PC-9 (cell line): ENCODE measurements at regions of chr7 and their contacts with region 1.

Region 1: GRCh38 chr7:94087664-94088352 is 83.7 kb upstream of the BET1 start:
- DNase-seq: peak; percentile 57 to 62
- H3K4me3 ChIP-seq: no peak overlapping the region
- H3K27ac ChIP-seq: no peak overlapping the region
- H3K4me1 ChIP-seq: no peaks in the 10 kb centered on the region
- H3K27me3 ChIP-seq: no peaks in the 10 kb centered on the region
- CTCF ChIP-seq: peak; percentile 80

Region 2: DNA sequence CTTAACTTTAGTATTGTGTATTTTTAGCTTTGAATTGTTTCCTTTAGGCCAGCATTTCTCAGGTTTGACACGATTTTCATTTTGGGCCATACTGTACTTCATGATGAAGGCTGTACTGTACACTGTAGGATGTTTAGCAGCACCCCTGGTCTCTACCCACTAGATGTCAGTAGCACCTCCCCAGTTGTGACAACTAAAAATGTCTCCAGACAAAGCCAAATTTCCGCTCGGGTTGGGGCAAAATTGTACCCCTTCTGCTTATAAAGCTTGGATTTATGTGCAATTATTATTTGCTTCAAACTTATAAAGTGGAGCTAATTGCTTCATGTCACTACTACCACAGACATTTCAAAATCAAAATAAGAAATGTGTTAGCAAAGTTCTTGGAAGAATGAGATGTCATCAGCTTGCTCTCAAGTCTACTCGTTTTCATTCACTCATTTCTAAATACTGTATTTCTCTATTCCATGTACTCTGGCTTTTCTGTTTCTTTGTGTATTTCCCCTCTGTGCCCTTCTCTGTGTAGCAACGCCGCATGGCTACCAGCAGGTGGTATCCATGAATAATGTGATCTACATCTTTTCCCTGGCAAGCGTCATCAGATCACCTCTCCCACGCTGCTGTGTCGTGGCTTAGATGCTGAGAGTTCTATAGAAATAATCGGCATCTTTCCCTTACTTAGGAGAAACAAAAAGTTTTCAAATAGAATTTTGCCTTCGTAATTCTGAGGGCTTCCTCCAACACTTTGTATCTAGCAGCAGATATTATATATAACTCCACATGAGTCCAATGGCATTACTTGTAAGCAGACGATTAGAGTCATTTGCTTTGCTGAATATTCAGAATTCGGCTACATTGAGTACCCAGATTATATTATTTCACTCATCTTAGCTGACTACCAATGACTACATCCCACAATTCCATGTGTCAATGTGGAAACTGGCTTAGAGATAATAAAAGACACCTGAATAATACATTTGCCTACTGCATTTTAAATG is 465.5 kb before region 1 on chr7:
- CTCF ChIA-PET with region 1: no interaction called
- POLR2A ChIA-PET with region 1: no interaction called
- intact Hi-C with region 1: loop called (anchors 5 kb)
- DNase-seq: peak in 1 of 2 experiments; percentile 10
- H3K4me3 ChIP-seq: peak overlapping the region; percentile 19; the same call in 1 of the 2 replicates
- H3K27ac ChIP-seq: no peak overlapping the region
- H3K4me1 ChIP-seq: no peaks in the 10 kb centered on the region
- H3K27me3 ChIP-seq: no peaks in the 10 kb centered on the region
- CTCF ChIP-seq: peak; percentile 62; the same call in 1 of the 2 replicates

Region 3: GRCh38 chr7:94004024-94004951 is 83.5 kb before region 1 on chr7 and contains the start of gene BET1:
- CTCF ChIA-PET with region 1: no interaction called
- POLR2A ChIA-PET with region 1: no interaction called
- intact Hi-C with region 1: loop called (anchors 5 kb)
- DNase-seq: peak; percentile 85 to 88
- H3K4me3 ChIP-seq: peak within 1 kb of the TSS; percentile 91
- H3K27ac ChIP-seq: peak within 1 kb of the TSS; percentile 77
- H3K4me1 ChIP-seq: peaks cover 11% of the 10 kb centered on the region
- H3K27me3 ChIP-seq: no peaks in the 10 kb centered on the region
- CTCF ChIP-seq: no peak
- total RNA-seq, gene BET1: 39.5 and 43.0 TPM in 2 replicates

Region 4: GRCh38 chr7:94223375-94224070 is 135.7 kb after region 1 on chr7:
- CTCF ChIA-PET with region 1: no interaction called
- POLR2A ChIA-PET with region 1: no interaction called
- intact Hi-C with region 1: loop called (anchors 1 kb)
- DNase-seq: peak in 1 of 2 experiments; percentile 57
- H3K4me3 ChIP-seq: no peak overlapping the region
- H3K27ac ChIP-seq: no peak overlapping the region
- H3K4me1 ChIP-seq: no peaks in the 10 kb centered on the region
- H3K27me3 ChIP-seq: no peaks in the 10 kb centered on the region
- CTCF ChIP-seq: no peak

Region 5: GRCh38 chr7:94276795-94277194 is 189.0 kb after region 1 on chr7:
- CTCF ChIA-PET with region 1: no interaction called
- POLR2A ChIA-PET with region 1: no interaction called
- intact Hi-C with region 1: loop called (anchors 2 kb)
- DNase-seq: peak in 1 of 2 experiments; percentile 12
- H3K4me3 ChIP-seq: no peak overlapping the region
- H3K27ac ChIP-seq: no peak overlapping the region
- H3K4me1 ChIP-seq: no peaks in the 10 kb centered on the region
- H3K27me3 ChIP-seq: no peaks in the 10 kb centered on the region
- CTCF ChIP-seq: peak; percentile 49

Region 6: GRCh38 chr7:94355454-94355853 is 267.6 kb after region 1 on chr7:
- CTCF ChIA-PET with region 1: no interaction called
- POLR2A ChIA-PET with region 1: no interaction called
- intact Hi-C with region 1: no loop called
- DNase-seq: no peak
- H3K4me3 ChIP-seq: no peak overlapping the region
- H3K27ac ChIP-seq: no peak overlapping the region
- H3K4me1 ChIP-seq: no peaks in the 10 kb centered on the region
- H3K27me3 ChIP-seq: no peaks in the 10 kb centered on the region
- CTCF ChIP-seq: no peak